ENCODE measurements at regions of chr17 and their contacts with region 1.

Region 1: DNA sequence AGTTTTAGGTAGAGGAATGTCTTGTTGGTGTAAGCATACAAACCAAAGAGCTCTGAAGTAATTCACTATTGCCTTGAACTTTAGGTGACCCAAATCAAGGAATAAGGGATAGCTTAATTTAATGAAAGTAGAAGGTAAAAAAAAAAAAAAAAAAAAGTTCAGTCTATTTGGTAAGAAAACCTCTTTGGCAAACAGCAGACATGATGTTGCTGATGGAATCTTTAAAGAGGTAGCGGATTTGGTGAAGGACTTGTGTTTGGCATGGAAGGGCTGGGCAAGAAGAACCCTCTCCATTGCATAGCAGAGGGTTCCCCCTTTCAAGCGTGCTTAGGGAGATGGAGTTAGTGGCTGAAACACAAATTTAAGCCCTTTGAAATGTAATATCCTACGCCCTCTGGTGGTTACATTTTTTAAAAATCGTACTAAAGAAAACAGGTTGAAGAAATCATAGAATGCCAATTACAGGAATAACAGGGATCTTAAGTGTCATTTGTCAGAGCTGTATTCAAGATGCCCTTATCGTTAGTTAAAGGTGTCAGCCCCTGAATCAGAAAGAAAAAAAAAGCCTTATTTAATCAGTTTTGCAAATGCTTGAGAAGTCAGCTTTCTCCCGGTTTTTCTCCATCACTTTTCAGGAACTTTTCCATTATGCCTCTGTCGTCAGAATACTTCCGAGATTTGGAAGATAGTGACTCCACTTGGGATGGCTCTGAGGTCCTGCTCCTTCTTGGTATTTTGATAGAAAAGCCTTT is 383.1 kb downstream of the KCNJ2 start:
- DNase-seq: no peak

Region 2: DNA sequence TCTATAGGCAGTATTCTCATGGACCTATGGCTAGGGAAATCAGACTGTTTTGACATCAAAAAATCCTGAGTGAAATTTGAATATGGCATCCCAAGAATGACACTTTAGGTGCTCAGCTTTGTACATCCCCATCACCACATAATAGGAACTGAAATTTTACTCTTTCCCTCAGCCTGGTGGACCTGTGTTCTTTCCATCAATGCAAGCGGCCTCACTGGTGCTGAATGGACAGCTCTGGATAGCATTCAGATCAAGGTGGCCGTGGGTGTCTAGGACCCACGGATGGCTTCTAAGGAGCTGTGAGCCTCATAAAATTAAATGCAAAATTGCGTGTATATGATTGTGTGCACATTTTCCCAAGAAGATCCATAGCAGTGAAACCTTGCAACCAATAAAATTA is 985.3 kb before region 1 on chr17:
- intact Hi-C with region 1: loop called (anchors 5 kb)
- DNase-seq: no peak

Region 3: DNA sequence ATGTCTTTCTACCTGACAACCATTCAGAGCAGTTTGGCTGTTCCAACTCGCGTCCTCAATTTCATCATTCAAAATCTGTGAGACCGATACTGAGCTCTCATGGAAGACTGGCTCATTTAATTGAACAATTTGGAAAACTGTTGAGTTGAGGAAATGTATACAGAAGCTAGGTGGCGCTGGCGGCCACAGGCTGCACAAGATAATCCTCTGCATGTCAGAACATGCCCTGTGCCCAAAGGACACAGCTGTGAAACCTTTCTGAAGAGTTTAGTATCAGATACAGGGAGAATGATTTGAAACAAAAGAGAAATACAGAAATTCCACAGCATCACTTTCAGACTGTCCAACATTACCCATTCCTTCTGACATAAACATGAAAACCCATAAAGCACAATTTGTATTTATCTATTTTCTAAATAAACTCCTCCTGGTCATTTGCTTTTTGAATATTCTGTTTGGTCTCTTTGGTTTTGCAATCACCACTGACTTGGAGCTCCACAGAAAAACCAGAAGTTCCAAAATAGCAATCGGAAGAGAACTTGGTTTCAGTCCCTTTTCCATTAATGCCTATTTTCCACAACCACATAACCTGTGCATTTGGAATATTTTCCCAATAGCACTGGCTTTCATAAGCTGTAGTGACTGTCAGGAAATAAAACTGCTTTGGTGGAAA is 945.1 kb before region 1 on chr17:
- intact Hi-C with region 1: loop called (anchors 5 kb)
- DNase-seq: peak; percentile 37 to 96 (median 72)

Region 4: DNA sequence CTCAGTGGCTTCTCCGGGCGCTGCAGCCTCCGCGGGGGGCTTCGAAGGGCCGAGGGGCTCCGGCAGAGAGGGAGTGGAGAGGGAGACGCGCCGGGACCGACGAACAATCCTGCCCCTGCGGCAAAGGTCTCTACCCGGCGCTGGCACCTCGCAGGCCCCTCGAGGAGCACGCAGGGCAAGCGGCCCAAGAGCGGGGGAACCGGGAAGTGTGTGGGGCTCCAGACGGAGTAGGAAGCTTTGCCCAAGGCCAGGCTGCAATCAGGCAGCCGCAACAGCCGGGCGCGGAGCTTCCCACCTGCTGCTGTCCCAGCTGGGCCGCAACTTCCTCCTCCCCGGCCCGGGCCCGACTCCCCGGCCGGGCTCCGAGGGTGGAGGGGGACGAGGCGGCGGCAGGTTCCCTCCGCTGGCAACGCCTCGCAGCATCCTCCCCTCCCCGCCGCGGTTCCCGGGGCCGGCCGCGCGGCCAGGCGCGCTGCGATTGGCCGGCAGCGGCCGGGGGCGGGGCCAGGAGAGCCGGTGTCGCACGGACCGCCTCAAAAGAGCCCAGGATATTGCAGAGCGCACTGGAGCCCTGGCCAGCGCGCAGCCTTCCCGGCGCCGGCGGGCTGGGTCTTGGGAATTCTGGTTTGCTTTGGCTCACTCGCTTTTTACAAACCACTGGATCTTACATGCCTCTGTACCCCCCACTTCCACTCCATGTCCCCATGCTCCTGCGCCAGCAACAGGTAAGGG is 383.3 kb before region 1 on chr17 and contains the start of gene KCNJ2:
- intact Hi-C with region 1: loop called (anchors 5 kb)
- DNase-seq: peak; percentile 84 to 99 (median 89)

Region 5: GRCh38 chr17:70535986-70536385 is 16.4 kb before region 1 on chr17:
- intact Hi-C with region 1: no loop called
- DNase-seq: no peak

Region 6: GRCh38 chr17:70739065-70739464 is 186.7 kb after region 1 on chr17:
- intact Hi-C with region 1: no loop called
- DNase-seq: no peak